Calu3 (cell line): ENCODE measurements at regions of chr1 and their contacts with region 1.

Region 1: DNA sequence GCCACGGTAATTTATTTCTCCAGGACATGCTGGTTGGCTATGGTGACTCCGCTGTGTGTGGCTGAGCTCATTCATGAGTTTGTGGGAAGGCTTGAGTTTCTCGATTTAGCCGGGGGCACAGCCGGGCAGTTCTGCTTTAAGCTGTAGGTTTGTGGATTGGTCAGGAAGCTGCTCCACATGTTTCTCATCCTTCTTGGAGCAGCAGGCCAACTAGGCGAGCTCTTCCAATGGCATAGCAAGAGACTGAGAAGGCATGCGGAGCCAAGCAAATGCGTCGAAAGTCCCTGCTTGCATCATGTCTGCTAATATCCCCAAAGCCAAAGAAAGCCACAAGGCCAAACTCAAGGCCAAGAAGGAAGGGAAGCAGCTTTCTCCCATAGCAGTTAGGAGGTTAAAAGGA is 71.6 kb upstream of the GREM2 start:
- DNase-seq: no peak
- H3K4me3 Mint-ChIP-seq: no peak overlapping the region
- H3K27ac Mint-ChIP-seq: no peak overlapping the region
- H3K4me1 Mint-ChIP-seq: no peaks in the 10 kb centered on the region
- H3K27me3 Mint-ChIP-seq: no peaks in the 10 kb centered on the region
- CTCF ChIP-seq: no peak

Region 2: DNA sequence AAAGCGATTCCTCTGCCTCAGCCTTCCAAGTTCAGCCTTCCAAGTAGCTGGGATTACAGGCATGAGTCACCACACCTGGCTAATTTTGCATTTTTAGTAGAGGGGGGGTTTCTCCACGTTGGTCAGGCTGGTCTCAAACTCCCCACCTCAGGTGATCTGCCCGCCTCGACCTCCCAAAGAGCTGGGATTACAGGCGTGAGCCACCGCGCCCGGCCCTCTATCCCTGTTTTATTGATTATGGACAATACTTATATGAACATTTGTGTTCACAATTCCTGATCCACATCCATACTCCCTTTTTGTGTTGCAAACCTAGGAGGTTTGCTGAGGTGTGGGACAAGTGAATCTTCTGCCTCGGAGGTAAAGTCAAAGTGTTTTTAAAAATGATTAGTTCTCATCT is 316.9 kb before region 1 on chr1:
- CTCF ChIA-PET with region 1: no interaction called
- intact Hi-C with region 1: loop called (anchors 5 kb)
- DNase-seq: no peak
- H3K4me3 Mint-ChIP-seq: no peak overlapping the region
- H3K27ac Mint-ChIP-seq: no peak overlapping the region
- H3K4me1 Mint-ChIP-seq: no peaks in the 10 kb centered on the region
- H3K27me3 Mint-ChIP-seq: no peaks in the 10 kb centered on the region
- CTCF ChIP-seq: no peak